MCF 10A (cell line): ENCODE measurements at regions of chr22 and their contacts with region 1.

Region 1: GRCh38 chr22:37965940-37966664 is 12.6 kb downstream of the POLR2F start:
- DNase-seq: peak; percentile 37
- H3K4me3 Mint-ChIP-seq: no peak overlapping the region
- H3K27ac Mint-ChIP-seq: peak overlapping the region; percentile 31
- H3K4me1 Mint-ChIP-seq: peaks cover 6% of the 10 kb centered on the region
- H3K27me3 Mint-ChIP-seq: no peaks in the 10 kb centered on the region
- CTCF ChIP-seq: no peak

Region 2: DNA sequence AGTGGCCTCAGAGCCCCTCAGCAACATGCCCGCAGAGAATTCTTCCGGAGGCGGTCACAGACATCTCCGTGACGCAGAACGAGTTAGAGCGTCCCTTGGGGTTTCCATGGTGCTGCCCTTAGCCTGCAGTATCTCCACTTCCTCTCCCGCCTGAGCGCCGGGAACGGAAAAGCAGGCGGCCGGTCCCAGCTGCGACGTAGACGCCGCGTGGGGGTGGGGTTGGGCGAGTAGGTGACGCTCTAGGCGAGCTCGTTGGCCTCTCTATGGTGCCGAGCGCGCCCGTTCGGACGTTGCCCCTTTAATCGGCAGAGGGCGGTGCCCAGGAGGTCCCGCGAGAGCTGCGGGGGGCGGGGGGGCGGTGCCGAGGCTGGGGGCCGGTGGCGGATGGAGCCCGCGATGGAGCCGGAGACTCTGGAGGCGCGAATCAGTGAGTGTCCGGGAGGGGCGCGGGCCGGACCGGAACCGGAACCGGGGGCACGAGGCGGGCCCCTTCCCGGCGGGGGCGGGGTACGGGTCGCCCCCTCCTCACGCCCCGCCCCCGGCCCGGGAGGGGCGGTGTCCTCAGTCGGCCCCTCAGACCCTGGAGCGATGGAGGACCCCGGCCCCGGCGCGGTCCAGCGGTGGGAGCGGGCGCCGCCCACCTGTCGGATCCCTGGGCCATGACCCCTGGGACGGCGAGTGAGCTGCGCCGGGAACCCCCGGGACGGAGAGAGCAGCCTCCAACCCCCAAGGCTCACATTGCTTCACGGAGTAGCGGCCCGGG is 357.4 kb before region 1 on chr22 and contains the start of gene GGA1:
- CTCF ChIA-PET with region 1: interaction called, 3 read pairs
- POLR2A ChIA-PET with region 1: no interaction called
- intact Hi-C with region 1: loop called (anchors 1 kb)
- DNase-seq: peak; percentile 96
- H3K4me3 Mint-ChIP-seq: peak within 1 kb of the TSS; percentile 85
- H3K27ac Mint-ChIP-seq: peak within 1 kb of the TSS; percentile 98
- H3K4me1 Mint-ChIP-seq: peaks cover 12% of the 10 kb centered on the region
- H3K27me3 Mint-ChIP-seq: no peaks in the 10 kb centered on the region
- CTCF ChIP-seq: no peak
- total RNA-seq, gene GGA1: 52.7 and 59.1 TPM in 2 replicates

Region 3: DNA sequence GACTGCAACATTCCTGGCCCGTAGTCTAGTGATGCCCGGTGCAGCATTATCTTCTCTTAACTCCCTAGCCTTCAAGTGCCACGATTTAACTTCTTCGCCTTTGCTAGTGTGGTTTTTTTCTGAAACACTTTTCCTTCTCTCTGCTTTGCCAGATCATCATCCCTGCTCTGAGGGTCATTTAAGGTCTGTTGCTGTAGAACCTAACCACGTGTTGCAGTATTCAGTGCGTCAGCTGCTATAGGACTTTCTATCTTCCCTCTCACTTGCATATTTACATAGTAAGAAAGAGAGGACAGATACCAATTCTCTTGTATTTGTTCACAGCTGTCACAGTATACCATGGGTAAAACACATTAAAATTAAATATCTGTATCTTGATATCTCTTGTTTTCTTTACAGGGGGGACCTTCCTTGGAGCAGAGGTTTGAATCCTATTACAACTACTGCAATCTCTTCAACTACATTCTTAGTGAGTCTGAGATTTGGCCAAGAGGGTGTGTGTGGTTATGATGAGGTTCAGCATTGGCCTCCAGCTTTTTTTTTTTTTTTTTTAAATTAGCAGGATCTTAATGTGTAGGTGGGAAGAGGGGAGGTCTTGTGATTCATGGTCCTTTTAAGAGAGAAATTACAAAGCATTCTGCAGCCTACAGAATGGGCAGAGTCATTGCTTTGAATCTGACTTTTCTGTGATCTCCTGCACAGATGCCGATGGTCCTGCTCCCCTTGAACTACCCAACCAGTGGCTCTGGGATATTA is 103.4 kb before region 1 on chr22:
- CTCF ChIA-PET with region 1: interaction called, 13 read pairs
- POLR2A ChIA-PET with region 1: no interaction called
- intact Hi-C with region 1: no loop called
- DNase-seq: no peak
- H3K4me3 Mint-ChIP-seq: no peak overlapping the region
- H3K27ac Mint-ChIP-seq: peak overlapping the region; percentile 49
- H3K4me1 Mint-ChIP-seq: peaks cover 10% of the 10 kb centered on the region
- H3K27me3 Mint-ChIP-seq: no peaks in the 10 kb centered on the region
- CTCF ChIP-seq: no peak

Region 4: GRCh38 chr22:37905534-37906363 is 60.4 kb before region 1 on chr22 and contains the start of gene MICALL1:
- CTCF ChIA-PET with region 1: interaction called, 10 read pairs
- POLR2A ChIA-PET with region 1: interaction called, 5 read pairs
- intact Hi-C with region 1: loop called (anchors 1 kb)
- DNase-seq: peak; percentile 77
- H3K4me3 Mint-ChIP-seq: peak within 1 kb of the TSS; percentile 78
- H3K27ac Mint-ChIP-seq: peak within 1 kb of the TSS; percentile 84
- H3K4me1 Mint-ChIP-seq: peaks cover 37% of the 10 kb centered on the region
- H3K27me3 Mint-ChIP-seq: no peaks in the 10 kb centered on the region
- CTCF ChIP-seq: no peak
- total RNA-seq, gene MICALL1: 164 and 165 TPM in 2 replicates

Region 5: DNA sequence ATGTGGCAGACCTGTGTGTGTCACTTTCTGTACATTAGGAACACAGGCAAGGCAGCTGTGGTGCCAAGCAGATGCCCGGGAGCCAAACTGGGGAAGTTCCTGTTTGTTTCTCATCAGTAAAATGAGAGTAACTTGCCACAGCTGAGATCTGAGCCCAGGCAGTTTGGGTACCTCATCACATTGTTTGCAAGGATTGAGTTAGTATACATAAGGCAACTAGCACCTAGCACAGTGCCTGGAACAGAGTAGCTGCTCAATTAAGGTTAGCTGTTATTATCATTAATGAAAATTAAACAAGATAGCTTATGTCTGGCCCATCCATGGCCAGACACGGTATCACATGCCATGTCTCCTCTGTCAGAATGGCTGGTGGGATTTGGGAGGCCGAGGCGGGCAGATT is 10.4 kb after region 1 on chr22:
- CTCF ChIA-PET with region 1: interaction called, 11 read pairs
- POLR2A ChIA-PET with region 1: interaction called, 3 read pairs
- intact Hi-C with region 1: no loop called
- DNase-seq: no peak
- H3K4me3 Mint-ChIP-seq: no peak overlapping the region
- H3K27ac Mint-ChIP-seq: peak overlapping the region; percentile 41
- H3K4me1 Mint-ChIP-seq: no peaks in the 10 kb centered on the region
- H3K27me3 Mint-ChIP-seq: no peaks in the 10 kb centered on the region
- CTCF ChIP-seq: no peak

Region 6: DNA sequence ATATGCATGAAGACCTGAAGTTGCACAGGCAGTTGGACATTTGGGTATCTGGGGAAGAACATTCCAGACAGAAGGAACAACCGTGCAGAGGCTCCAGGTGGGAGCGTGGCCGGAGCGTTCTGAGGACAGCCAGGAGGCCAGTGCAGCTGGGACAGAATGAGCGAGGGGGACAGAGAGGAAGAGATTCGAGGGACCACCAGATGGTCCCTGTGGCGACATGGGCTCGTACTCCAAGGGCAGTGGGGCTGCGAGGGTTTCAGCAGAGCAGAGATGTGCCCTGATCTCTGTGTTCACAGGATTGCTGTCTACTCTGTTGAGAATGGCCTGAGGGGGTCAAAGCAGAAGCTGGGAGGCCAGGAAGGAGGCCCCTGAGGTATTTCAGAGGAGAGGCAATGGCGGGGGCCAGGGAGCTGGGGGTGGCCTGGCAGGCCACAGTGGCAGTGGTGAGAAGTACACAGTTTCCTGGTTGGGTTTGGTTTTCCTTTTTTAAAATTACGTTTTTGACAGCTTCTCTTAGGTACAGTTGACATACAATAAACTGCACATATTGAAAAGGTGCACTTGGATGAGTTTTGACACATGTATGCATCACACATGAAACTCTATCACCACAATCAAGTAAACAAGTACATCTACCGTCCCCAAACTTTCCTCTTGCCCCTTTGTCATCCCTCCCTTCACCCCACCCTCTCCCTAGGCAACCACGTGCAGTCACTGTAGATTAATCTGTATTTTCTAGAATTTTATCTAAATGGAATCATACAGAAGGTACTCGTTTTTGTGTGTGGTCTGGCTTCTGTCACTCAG is 43.1 kb after region 1 on chr22:
- CTCF ChIA-PET with region 1: no interaction called
- POLR2A ChIA-PET with region 1: no interaction called
- intact Hi-C with region 1: no loop called
- DNase-seq: no peak
- H3K4me3 Mint-ChIP-seq: no peak overlapping the region
- H3K27ac Mint-ChIP-seq: no peak overlapping the region
- H3K4me1 Mint-ChIP-seq: peaks cover 8% of the 10 kb centered on the region
- H3K27me3 Mint-ChIP-seq: no peaks in the 10 kb centered on the region
- CTCF ChIP-seq: no peak